ENCODE measurements at regions of chr19 and their contacts with region 1.

Region 1: DNA sequence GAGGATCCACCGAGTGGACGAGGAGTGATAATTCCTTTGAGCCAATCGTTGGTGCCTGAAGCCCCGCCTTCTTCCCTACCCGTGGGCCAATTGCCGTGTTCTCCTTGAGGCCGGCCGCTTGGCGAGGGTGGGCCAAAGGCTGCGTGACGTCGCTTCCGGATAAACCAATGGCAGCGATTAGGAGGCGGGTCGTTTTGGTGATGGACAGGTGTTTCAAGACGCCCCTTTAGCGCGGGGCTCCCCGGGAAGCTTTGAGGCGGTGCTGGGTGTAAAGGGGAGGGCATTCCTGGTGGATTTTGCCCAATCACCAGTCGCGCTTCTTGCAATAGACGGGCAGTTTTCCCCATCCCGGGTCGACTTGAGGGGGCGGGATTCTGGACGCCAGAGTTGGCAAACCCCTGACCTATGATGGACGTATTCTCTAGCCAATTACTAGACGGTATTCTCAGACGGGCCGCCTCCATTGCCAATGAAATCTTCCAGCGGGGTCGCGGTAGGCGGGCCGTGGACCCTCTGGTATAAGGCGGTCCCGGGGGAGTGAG is 310 bp upstream of the PRMT1 start:
- DNase-seq: peak; percentile 95 to 100 (median 98)
- ATAC-seq: peak; percentile 72
- H3K4me3 ChIP-seq: peak overlapping the region; percentile 99
- H3K4me3 Mint-ChIP-seq: peak overlapping the region; percentile 97
- H3K27ac ChIP-seq: peak overlapping the region; percentile 98
- H3K27ac Mint-ChIP-seq: peak overlapping the region; percentile 97
- H3K4me1 ChIP-seq: peaks cover 56% of the 10 kb centered on the region
- H3K4me1 Mint-ChIP-seq: peaks cover 46% of the 10 kb centered on the region
- H3K27me3 ChIP-seq: no peaks in the 10 kb centered on the region
- H3K27me3 Mint-ChIP-seq: no peaks in the 10 kb centered on the region
- CTCF ChIP-seq: no peak

Region 2: DNA sequence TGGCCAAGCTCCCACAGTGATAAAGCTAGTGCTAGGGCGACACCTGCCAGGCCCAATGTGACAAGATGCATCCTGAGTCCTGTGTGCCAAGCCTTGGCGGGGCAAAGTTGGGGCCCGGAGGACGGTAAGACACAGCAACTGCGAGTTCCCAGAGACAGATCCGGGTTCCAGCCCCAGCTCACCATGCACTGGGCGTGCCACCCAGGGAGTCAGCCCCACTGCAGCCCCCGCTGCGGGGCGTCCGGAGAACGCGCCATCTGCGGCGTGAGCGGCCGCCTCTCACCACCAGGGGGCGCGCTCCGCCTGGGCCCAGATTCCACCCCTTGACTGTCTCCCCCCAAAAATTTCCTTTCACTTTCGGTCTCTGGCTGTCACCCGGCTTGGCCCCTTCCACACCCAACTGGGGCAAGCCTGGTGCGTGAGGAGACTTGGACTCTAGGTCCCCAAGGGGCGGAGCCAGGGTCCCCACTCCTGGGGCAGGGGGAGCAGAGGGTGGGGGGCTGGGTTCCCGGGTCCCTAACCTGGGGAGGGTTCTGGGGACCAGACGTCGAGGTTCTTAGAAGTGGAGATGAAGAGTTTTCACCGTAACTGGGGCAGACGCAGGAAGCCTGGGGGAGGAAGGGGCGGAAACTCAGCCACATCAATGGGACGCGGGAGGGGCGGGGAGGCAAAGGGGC is 202.8 kb before region 1 on chr19 and contains the start of gene FLT3LG:
- CTCF ChIA-PET with region 1: interaction called, 3 read pairs
- POLR2A ChIA-PET with region 1: interaction called, 7 read pairs
- intact Hi-C with region 1: loop called in 1 of 2 experiments (anchors 10 kb)
- DNase-seq: peak; percentile 85 to 98 (median 90)
- ATAC-seq: peak; percentile 49
- H3K4me3 ChIP-seq: peak within 1 kb of the TSS; percentile 97
- H3K4me3 Mint-ChIP-seq: peak within 1 kb of the TSS; percentile 100
- H3K27ac ChIP-seq: peak within 1 kb of the TSS; percentile 90 to 98
- H3K27ac Mint-ChIP-seq: peak within 1 kb of the TSS; percentile 98
- H3K4me1 ChIP-seq: peaks cover 78% of the 10 kb centered on the region
- H3K4me1 Mint-ChIP-seq: peaks cover 59% of the 10 kb centered on the region
- H3K27me3 ChIP-seq: no peaks in the 10 kb centered on the region
- H3K27me3 Mint-ChIP-seq: no peaks in the 10 kb centered on the region
- CTCF ChIP-seq: peak; percentile 95
- total RNA-seq, gene FLT3LG: 311 to 325 TPM

Region 3: DNA sequence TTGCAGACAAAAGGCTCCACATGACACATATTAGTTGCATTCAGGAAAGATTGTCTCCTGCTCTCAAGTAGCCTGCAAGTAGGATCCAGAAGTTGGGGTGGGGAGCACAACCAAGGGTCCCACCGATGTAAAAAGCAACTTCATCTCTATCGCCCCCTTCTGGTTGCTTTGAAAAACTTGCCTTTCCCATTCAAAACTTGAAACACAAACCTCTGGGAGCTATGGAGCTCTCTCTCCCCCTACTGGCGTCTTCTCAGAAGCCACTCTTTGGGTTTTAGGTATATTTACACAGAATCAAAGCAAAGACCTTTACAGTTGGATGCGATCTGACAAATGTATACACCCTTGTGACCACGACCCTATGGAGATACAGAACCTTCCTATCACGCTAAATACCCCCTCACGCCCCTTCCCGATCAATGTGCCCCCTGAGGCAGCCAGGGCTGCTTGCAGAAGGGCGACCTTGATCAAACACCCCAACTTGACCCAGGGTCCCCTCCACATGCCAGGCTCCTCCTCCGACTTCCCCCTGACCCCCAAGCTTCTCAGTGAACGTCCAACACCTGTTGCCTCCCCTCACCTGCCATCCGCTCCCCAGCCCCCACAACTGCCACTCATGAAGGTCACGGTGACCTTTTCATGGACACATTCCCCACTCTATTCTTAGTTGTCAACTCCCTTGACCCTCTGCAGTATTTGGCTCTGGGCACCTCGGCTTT is 106.5 kb before region 1 on chr19:
- CTCF ChIA-PET with region 1: interaction called, 22 read pairs
- POLR2A ChIA-PET with region 1: interaction called, 17 read pairs
- intact Hi-C with region 1: loop called (anchors 1 to 2 kb)
- DNase-seq: peak in 12 of 14 experiments; percentile 50 to 94 (median 66)
- ATAC-seq: peak; percentile 7
- H3K4me3 ChIP-seq: no peak overlapping the region
- H3K4me3 Mint-ChIP-seq: peak overlapping the region; percentile 85
- H3K27ac ChIP-seq: no peak overlapping the region
- H3K27ac Mint-ChIP-seq: peak overlapping the region; percentile 89
- H3K4me1 ChIP-seq: peaks cover 64% of the 10 kb centered on the region
- H3K4me1 Mint-ChIP-seq: peaks cover 55% of the 10 kb centered on the region
- H3K27me3 ChIP-seq: no peaks in the 10 kb centered on the region
- H3K27me3 Mint-ChIP-seq: no peaks in the 10 kb centered on the region
- CTCF ChIP-seq: peak; percentile 99

Region 4: GRCh38 chr19:49631014-49631588 is 45.7 kb before region 1 on chr19:
- CTCF ChIA-PET with region 1: no interaction called
- POLR2A ChIA-PET with region 1: interaction called, 10 read pairs
- intact Hi-C with region 1: no loop called
- DNase-seq: no peak
- ATAC-seq: no peak
- H3K4me3 ChIP-seq: no peak overlapping the region
- H3K4me3 Mint-ChIP-seq: no peak overlapping the region
- H3K27ac ChIP-seq: no peak overlapping the region
- H3K27ac Mint-ChIP-seq: peak overlapping the region; percentile 61
- H3K4me1 ChIP-seq: no peaks in the 10 kb centered on the region
- H3K4me1 Mint-ChIP-seq: no peaks in the 10 kb centered on the region
- H3K27me3 ChIP-seq: no peaks in the 10 kb centered on the region
- H3K27me3 Mint-ChIP-seq: no peaks in the 10 kb centered on the region
- CTCF ChIP-seq: no peak

Region 5: DNA sequence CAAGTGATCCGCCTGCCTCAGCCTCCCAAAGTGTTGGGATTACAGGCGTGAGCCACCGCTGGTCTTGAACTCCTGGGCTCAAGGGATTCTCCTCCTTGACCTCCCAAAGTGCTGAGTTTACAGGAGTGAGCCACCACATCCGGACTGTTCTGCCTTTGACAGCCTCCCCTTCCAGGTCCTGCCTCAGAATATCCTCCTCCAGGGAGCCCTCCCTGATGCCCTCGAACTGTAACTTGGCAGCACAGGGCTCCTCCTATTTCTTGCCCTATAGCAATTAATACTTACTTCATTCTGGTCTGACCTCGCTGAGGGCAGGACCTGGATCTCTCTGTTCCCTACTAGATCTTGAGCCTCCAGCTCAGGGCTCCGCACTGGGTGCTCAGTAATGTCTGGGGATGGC is 20.1 kb after region 1 on chr19:
- CTCF ChIA-PET with region 1: no interaction called
- POLR2A ChIA-PET with region 1: no interaction called
- intact Hi-C with region 1: no loop called
- DNase-seq: no peak
- ATAC-seq: no peak
- H3K4me3 ChIP-seq: no peak overlapping the region
- H3K4me3 Mint-ChIP-seq: no peak overlapping the region
- H3K27ac ChIP-seq: no peak overlapping the region
- H3K27ac Mint-ChIP-seq: no peak overlapping the region
- H3K4me1 ChIP-seq: peaks cover 3% of the 10 kb centered on the region
- H3K4me1 Mint-ChIP-seq: no peaks in the 10 kb centered on the region
- H3K27me3 ChIP-seq: peaks cover 0 to 3% of the 10 kb centered on the region in 2 experiments
- H3K27me3 Mint-ChIP-seq: peaks cover 13% of the 10 kb centered on the region
- CTCF ChIP-seq: no peak

Region 6: DNA sequence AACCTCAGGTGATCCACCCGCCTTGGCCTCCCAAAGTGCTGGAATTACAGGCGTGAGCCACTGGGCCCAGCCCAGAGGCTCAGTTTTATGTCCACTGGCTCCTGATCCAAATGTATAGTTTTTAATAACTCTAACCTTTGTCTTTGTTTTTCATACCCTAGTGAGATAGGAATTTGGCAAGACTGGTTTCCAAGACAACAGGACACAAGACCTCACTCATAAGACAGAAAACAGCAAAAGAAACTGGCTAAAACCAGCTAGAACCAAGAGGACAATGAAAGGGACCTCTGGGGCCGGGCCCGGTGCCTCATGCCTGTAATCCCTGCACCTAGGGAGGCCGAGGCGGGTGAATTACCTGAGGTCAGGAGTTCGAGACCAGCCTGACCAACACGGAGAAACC is 41.8 kb after region 1 on chr19:
- CTCF ChIA-PET with region 1: interaction called, 3 read pairs
- POLR2A ChIA-PET with region 1: interaction called, 10 read pairs
- intact Hi-C with region 1: loop called in 1 of 2 experiments (anchors 1 kb)
- DNase-seq: no peak
- ATAC-seq: no peak
- H3K4me3 ChIP-seq: no peak overlapping the region
- H3K4me3 Mint-ChIP-seq: peak overlapping the region; percentile 58
- H3K27ac ChIP-seq: no peak overlapping the region
- H3K27ac Mint-ChIP-seq: peak overlapping the region; percentile 79
- H3K4me1 ChIP-seq: peaks cover 13% of the 10 kb centered on the region
- H3K4me1 Mint-ChIP-seq: peaks cover 13% of the 10 kb centered on the region
- H3K27me3 ChIP-seq: no peaks in the 10 kb centered on the region
- H3K27me3 Mint-ChIP-seq: no peaks in the 10 kb centered on the region
- CTCF ChIP-seq: no peak

Region 7: DNA sequence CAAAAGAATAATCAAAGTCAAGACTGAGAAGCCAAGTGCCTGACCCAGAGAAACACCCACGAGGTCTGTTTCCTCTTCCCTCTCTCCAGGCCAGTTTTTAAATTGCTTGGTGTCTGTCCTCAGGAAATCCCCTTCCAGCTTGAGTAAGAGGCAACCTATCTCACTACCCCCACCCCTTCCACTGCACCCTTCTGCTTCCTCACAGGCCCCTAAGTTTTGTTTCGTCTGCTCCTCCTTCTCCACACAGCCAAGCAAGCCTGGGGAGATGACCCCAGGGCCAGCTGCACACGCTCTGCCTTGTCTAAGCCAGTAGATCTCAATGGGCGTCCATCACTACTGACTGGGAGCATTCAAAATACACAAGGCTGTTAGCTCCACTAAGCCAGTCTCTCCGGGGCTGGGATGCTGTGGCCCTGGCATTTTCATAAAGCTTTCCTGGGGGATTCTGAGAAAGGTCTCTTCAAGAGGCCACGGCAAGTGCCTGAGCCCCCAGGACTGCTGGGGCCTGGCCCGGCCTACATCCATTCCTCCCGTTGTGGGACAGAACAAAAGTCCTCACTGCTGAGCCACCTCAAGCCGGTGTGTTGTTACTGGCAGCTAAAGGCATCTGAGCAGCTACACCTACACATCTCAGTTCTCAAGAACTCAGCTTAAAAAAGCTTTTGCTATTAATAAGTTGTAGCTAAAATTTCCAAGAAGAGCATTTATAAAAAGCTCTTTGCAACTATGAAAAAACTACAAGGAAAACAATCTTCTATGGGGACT is 234.8 kb after region 1 on chr19:
- CTCF ChIA-PET with region 1: no interaction called
- POLR2A ChIA-PET with region 1: no interaction called
- intact Hi-C with region 1: no loop called
- DNase-seq: peak in 3 of 14 experiments; percentile 34 to 73 (median 68)
- ATAC-seq: peak; percentile 54
- H3K4me3 ChIP-seq: no peak overlapping the region
- H3K4me3 Mint-ChIP-seq: no peak overlapping the region
- H3K27ac ChIP-seq: peak overlapping the region; percentile 45 to 61
- H3K27ac Mint-ChIP-seq: peak overlapping the region; percentile 87
- H3K4me1 ChIP-seq: peaks cover 19% of the 10 kb centered on the region
- H3K4me1 Mint-ChIP-seq: peaks cover 29% of the 10 kb centered on the region
- H3K27me3 ChIP-seq: no peaks in the 10 kb centered on the region
- H3K27me3 Mint-ChIP-seq: no peaks in the 10 kb centered on the region
- CTCF ChIP-seq: no peak

Measured in CD4-positive, alpha-beta T cell (primary cell).